ENCODE measurements at regions of chr14 and their contacts with region 1.

Region 1: DNA sequence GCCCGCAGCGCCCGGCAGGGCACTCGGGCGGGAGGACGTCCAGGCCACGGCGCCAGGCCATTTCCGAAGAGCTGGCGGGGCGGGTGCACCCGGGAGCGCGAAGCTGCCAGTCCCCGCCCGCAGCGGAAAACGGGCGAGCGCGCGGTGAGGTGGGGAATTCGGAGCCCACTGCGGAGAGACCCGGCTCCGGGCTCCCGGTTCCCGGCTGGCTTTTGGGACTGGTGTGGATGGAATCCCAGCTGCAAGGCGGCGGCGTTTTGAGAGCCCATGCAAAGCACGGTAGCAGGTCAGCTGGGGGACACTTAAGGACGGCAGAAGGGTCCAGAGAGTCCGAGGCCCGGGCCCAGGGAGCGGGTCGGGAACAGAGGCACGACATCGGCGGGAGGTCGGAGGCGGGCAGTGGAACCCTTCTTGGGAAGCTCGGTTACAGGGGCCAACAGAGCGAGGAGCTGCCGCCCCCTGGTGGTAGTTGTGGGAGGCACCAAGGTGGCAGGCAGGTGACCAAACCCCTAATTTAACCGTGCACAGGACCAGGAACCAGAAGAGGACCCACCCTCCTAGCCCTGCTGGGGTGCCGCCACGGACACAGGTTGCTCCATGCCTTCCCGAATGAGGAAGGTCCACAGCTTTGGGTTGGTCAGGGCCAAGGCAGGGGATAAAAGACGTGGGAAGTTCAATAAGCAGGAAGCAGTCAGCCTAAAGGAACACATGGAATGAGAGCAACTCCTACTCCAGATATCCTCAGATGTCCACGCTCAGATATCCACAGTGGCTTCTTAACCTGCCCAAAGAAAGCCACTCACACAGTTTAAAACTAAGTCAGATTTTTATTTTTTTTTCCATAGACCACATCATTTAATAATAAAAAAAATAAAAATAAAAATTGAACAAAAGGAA is 685 bp upstream of the CDH24 start:
- DNase-seq: peak; percentile 92
- H3K4me3 Mint-ChIP-seq: peak overlapping the region; percentile 78
- H3K27ac Mint-ChIP-seq: no peak overlapping the region
- H3K4me1 Mint-ChIP-seq: peaks cover 16% of the 10 kb centered on the region
- H3K27me3 Mint-ChIP-seq: peaks cover 2% of the 10 kb centered on the region

Region 2: GRCh38 chr14:22973217-22974032 is 84.6 kb before region 1 on chr14:
- CTCF ChIA-PET with region 1: interaction called, 129 read pairs
- POLR2A ChIA-PET with region 1: interaction called, 3 read pairs
- intact Hi-C with region 1: loop called (anchors 1 kb)
- DNase-seq: peak; percentile 55
- H3K4me3 Mint-ChIP-seq: no peak overlapping the region
- H3K27ac Mint-ChIP-seq: no peak overlapping the region
- H3K4me1 Mint-ChIP-seq: no peaks in the 10 kb centered on the region
- H3K27me3 Mint-ChIP-seq: no peaks in the 10 kb centered on the region

Region 3: GRCh38 chr14:23025151-23025814 is 32.7 kb before region 1 on chr14:
- CTCF ChIA-PET with region 1: interaction called, 11 read pairs
- POLR2A ChIA-PET with region 1: no interaction called
- intact Hi-C with region 1: no loop called
- DNase-seq: peak; percentile 53
- H3K4me3 Mint-ChIP-seq: peak overlapping the region; percentile 9
- H3K27ac Mint-ChIP-seq: peak overlapping the region; percentile 81
- H3K4me1 Mint-ChIP-seq: peaks cover 47% of the 10 kb centered on the region
- H3K27me3 Mint-ChIP-seq: no peaks in the 10 kb centered on the region

Region 4: GRCh38 chr14:23076785-23077408 is 18.9 kb after region 1 on chr14:
- CTCF ChIA-PET with region 1: interaction called, 65 read pairs
- POLR2A ChIA-PET with region 1: interaction called, 4 read pairs
- intact Hi-C with region 1: no loop called
- DNase-seq: no peak
- H3K4me3 Mint-ChIP-seq: no peak overlapping the region
- H3K27ac Mint-ChIP-seq: no peak overlapping the region
- H3K4me1 Mint-ChIP-seq: peaks cover 7% of the 10 kb centered on the region
- H3K27me3 Mint-ChIP-seq: no peaks in the 10 kb centered on the region

Region 5: GRCh38 chr14:23114669-23115491 is 56.9 kb after region 1 on chr14:
- CTCF ChIA-PET with region 1: interaction called, 10 read pairs
- POLR2A ChIA-PET with region 1: no interaction called
- intact Hi-C with region 1: no loop called
- DNase-seq: no peak
- H3K4me3 Mint-ChIP-seq: no peak overlapping the region
- H3K27ac Mint-ChIP-seq: no peak overlapping the region
- H3K4me1 Mint-ChIP-seq: peaks cover 24% of the 10 kb centered on the region
- H3K27me3 Mint-ChIP-seq: peaks cover 2% of the 10 kb centered on the region

Measured in activated CD4-positive, alpha-beta memory T cell treated with anti-CD3 and anti-CD28 coated beads for 36 hours (primary cell).